GM12878 (cell line): ENCODE measurements at regions of chr7 and their contacts with region 1.

Region 1: GRCh38 chr7:46626691-46627310 is 705.7 kb upstream of the IGFBP3 start:
- DNase-seq: no peak
- ATAC-seq: peak; percentile 26; the same call in 1 of the 3 replicates
- H3K4me3 ChIP-seq: no peak overlapping the region
- H3K27ac ChIP-seq: no peak overlapping the region
- H3K4me1 ChIP-seq: no peaks in the 10 kb centered on the region
- H3K27me3 ChIP-seq: no peaks in the 10 kb centered on the region
- CTCF ChIP-seq: no peak
- EP300 ChIP-seq: no peak
- POLR2A ChIP-seq: no peak
- RAD21 ChIP-seq: no peak

Region 2: GRCh38 chr7:46613116-46613515 is 13.7 kb before region 1 on chr7:
- CTCF ChIA-PET with region 1: interaction called, 4 read pairs
- POLR2A ChIA-PET with region 1: interaction called, 5 read pairs
- RAD21 ChIA-PET with region 1: interaction called, 6 read pairs
- SMC1A ChIA-PET with region 1: interaction called, 13 read pairs
- in situ Hi-C with region 1: no loop called
- intact Hi-C with region 1: no loop called
- DNase-seq: no peak
- ATAC-seq: no peak
- H3K4me3 ChIP-seq: no peak overlapping the region
- H3K27ac ChIP-seq: no peak overlapping the region
- H3K4me1 ChIP-seq: no peaks in the 10 kb centered on the region
- H3K27me3 ChIP-seq: no peaks in the 10 kb centered on the region
- CTCF ChIP-seq: no peak
- EP300 ChIP-seq: no peak
- POLR2A ChIP-seq: no peak
- RAD21 ChIP-seq: no peak